ENCODE measurements at regions of chr10 and their contacts with region 1.

Region 1: GRCh38 chr10:80504158-80504811 is 33.4 kb upstream of the SH2D4B start:
- DNase-seq: peak; percentile 73 to 90
- H3K4me3 ChIP-seq: no peak overlapping the region; the same call in 1 of the 2 replicates
- H3K4me3 Mint-ChIP-seq: peak overlapping the region; percentile 66
- H3K27ac Mint-ChIP-seq: peak overlapping the region; percentile 87
- H3K4me1 ChIP-seq: peaks cover 96% of the 10 kb centered on the region
- H3K4me1 Mint-ChIP-seq: peaks cover 73% of the 10 kb centered on the region
- H3K27me3 ChIP-seq: no peaks in the 10 kb centered on the region
- H3K27me3 Mint-ChIP-seq: no peaks in the 10 kb centered on the region
- CTCF ChIP-seq: no peak

Region 2: DNA sequence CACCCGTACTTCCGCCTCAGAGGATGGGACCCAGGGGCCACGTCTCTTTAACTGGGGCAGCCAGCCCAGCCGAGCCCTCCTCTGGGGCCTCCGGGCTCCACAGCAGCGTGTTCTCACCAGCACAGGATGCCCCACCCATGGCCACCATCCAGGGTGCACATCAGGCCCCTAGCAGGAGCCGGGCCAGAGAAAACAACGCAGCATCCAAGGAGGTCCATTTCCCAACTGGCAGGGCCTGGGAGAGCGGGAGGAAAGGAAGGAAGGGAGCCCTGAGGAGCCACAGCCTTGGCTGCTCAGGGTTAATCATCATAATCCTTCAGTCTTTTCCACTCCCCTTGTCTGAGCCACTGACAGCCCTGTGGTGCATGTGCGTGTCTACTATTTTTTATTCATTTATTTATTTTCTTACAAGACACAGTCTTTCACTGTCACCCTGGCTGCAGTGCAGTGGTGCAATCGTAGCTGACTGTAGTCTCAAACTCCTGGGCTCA is 368.2 kb before region 1 on chr10:
- CTCF ChIA-PET with region 1: no interaction called
- POLR2A ChIA-PET with region 1: no interaction called
- intact Hi-C with region 1: no loop called
- DNase-seq: no peak
- H3K4me3 ChIP-seq: no peak overlapping the region
- H3K4me3 Mint-ChIP-seq: no peak overlapping the region
- H3K27ac Mint-ChIP-seq: no peak overlapping the region
- H3K4me1 ChIP-seq: peaks cover 7% of the 10 kb centered on the region
- H3K4me1 Mint-ChIP-seq: peaks cover 14% of the 10 kb centered on the region
- H3K27me3 ChIP-seq: no peaks in the 10 kb centered on the region
- H3K27me3 Mint-ChIP-seq: no peaks in the 10 kb centered on the region
- CTCF ChIP-seq: no peak

Region 3: DNA sequence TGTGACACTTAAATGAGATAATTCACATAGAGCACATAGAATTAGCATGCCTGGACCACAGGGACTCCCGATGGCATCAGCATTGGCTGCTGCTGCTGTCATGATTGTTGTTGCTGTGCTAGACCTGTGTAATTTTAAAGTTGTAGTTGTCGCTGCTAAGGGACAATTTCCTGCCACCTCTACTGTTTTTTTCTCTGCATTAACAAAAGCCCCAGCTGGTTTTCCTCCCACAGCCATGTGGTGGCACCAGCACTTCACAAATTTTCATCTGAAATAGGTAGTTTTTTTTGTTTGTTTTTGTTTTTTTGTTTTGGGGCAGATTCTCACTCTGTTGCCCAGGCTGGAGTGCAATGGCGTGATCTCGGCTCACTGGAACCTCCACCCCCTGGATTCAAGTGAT is 121.3 kb before region 1 on chr10:
- CTCF ChIA-PET with region 1: interaction called, 6 read pairs
- POLR2A ChIA-PET with region 1: no interaction called
- intact Hi-C with region 1: loop called (anchors 1 kb)
- DNase-seq: peak; percentile 43 to 52
- H3K4me3 ChIP-seq: no peak overlapping the region
- H3K4me3 Mint-ChIP-seq: no peak overlapping the region
- H3K27ac Mint-ChIP-seq: no peak overlapping the region
- H3K4me1 ChIP-seq: no peaks in the 10 kb centered on the region
- H3K4me1 Mint-ChIP-seq: peaks cover 5% of the 10 kb centered on the region
- H3K27me3 ChIP-seq: no peaks in the 10 kb centered on the region
- H3K27me3 Mint-ChIP-seq: peaks cover 3% of the 10 kb centered on the region
- CTCF ChIP-seq: peak; percentile 50 to 61

Region 4: DNA sequence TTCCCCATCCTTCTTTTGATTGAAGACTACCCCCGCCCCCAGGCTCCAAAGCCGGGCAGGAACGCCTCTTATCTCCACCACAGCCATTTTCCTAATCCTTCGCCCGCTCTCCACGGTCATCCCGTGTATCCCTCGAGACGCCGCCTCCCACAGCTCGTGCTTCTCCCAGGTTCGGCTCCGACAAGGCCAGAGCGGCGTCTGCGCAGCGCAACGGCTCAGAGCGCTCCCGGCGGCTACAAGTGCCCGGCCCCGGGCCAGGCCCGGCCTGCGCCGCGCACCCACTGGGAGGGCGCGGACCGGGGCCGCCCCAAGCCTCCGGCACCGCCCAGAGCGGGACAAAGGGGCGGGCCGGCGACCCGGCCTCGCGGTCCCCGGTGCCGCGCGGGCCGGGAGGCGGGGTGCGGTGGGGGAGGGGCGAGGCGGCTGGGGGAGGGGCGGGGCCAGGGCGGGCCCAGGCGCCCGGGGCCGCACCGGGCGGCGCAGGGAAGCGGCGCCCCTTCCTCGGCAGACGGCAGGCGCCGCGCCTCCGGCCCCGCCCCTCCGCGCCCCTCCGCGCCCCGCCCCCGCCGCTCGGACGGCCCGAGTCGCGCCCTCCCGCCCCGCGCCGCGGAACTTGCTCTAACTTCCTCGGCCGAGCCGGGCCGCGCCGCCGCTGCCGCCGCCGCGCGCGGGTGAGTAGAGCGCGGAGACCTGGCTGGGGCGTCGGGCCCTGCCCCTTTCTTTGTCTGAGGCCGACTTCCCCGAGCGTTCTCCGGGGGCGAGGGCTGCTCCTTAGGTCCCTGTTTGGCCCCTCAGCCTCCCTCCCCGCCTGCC is 50.4 kb before region 1 on chr10 and contains the start of gene TSPAN14:
- CTCF ChIA-PET with region 1: interaction called, 55 read pairs
- POLR2A ChIA-PET with region 1: interaction called, 6 read pairs
- intact Hi-C with region 1: loop called (anchors 1 kb)
- DNase-seq: peak; percentile 81 to 87
- H3K4me3 ChIP-seq: peak within 1 kb of the TSS; percentile 86
- H3K4me3 Mint-ChIP-seq: no peak within 1 kb of the TSS
- H3K27ac Mint-ChIP-seq: peak within 1 kb of the TSS; percentile 75
- H3K4me1 ChIP-seq: peaks cover 62% of the 10 kb centered on the region
- H3K4me1 Mint-ChIP-seq: peaks cover 26% of the 10 kb centered on the region
- H3K27me3 ChIP-seq: no peaks in the 10 kb centered on the region
- H3K27me3 Mint-ChIP-seq: no peaks in the 10 kb centered on the region
- CTCF ChIP-seq: no peak
- total RNA-seq, gene TSPAN14: 138 and 140 TPM in 2 replicates

Region 5: GRCh38 chr10:80477813-80478212 is 26.5 kb before region 1 on chr10:
- CTCF ChIA-PET with region 1: interaction called, 5 read pairs
- POLR2A ChIA-PET with region 1: no interaction called
- intact Hi-C with region 1: loop called (anchors 1 kb)
- DNase-seq: no peak
- H3K4me3 ChIP-seq: no peak overlapping the region
- H3K4me3 Mint-ChIP-seq: no peak overlapping the region
- H3K27ac Mint-ChIP-seq: no peak overlapping the region
- H3K4me1 ChIP-seq: peaks cover 5% of the 10 kb centered on the region
- H3K4me1 Mint-ChIP-seq: peaks cover 30% of the 10 kb centered on the region
- H3K27me3 ChIP-seq: no peaks in the 10 kb centered on the region
- H3K27me3 Mint-ChIP-seq: no peaks in the 10 kb centered on the region
- CTCF ChIP-seq: no peak

Region 6: GRCh38 chr10:80530251-80530650 is 26.0 kb after region 1 on chr10:
- CTCF ChIA-PET with region 1: no interaction called
- POLR2A ChIA-PET with region 1: no interaction called
- intact Hi-C with region 1: loop called (anchors 1 kb)
- DNase-seq: peak in 1 of 2 experiments; percentile 43
- H3K4me3 ChIP-seq: no peak overlapping the region
- H3K4me3 Mint-ChIP-seq: no peak overlapping the region
- H3K27ac Mint-ChIP-seq: peak overlapping the region; percentile 12
- H3K4me1 ChIP-seq: peaks cover 20% of the 10 kb centered on the region; the same call in 1 of the 2 replicates
- H3K4me1 Mint-ChIP-seq: peaks cover 10% of the 10 kb centered on the region
- H3K27me3 ChIP-seq: no peaks in the 10 kb centered on the region
- H3K27me3 Mint-ChIP-seq: no peaks in the 10 kb centered on the region
- CTCF ChIP-seq: peak in 1 of 2 experiments; percentile 23

Measured in Caco-2 (cell line).